ENCODE measurements at regions of chr10 and their contacts with region 1.

Region 1: DNA sequence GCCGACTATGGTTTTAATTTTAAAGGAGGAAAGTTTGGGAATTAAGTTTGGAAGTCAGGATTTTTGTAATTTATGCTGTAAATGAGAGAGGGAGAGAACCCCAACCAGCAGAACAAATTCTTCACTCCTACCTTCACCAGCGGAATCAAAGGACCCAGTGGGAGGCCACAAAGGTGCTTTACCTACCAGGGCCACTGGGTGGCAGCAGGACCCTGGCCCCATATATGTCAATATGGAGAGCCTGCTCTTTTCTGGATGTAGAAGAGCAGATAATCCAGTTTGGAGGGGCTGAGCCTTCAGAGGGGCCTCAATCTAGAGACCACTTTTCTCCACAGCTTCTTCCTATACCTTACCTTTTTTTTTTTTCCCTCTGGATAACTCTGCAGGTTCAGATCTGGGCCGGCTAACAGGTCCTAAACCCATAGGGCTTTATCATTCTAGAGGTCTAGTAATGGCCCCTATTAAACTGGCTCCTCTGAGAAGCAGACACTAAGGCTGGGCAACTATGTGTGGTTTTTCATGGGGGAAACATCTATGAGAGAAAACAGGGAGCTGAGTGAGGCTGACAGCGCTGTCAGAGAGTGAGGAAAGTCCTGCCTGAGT is 8.5 kb upstream of the SCD start:
- DNase-seq: peak; percentile 73
- H3K4me3 ChIP-seq: no peak overlapping the region
- H3K27ac ChIP-seq: no peak overlapping the region
- H3K4me1 ChIP-seq: no peaks in the 10 kb centered on the region
- H3K27me3 ChIP-seq: peaks cover 56% of the 10 kb centered on the region
- CTCF ChIP-seq: peak; percentile 96

Region 2: DNA sequence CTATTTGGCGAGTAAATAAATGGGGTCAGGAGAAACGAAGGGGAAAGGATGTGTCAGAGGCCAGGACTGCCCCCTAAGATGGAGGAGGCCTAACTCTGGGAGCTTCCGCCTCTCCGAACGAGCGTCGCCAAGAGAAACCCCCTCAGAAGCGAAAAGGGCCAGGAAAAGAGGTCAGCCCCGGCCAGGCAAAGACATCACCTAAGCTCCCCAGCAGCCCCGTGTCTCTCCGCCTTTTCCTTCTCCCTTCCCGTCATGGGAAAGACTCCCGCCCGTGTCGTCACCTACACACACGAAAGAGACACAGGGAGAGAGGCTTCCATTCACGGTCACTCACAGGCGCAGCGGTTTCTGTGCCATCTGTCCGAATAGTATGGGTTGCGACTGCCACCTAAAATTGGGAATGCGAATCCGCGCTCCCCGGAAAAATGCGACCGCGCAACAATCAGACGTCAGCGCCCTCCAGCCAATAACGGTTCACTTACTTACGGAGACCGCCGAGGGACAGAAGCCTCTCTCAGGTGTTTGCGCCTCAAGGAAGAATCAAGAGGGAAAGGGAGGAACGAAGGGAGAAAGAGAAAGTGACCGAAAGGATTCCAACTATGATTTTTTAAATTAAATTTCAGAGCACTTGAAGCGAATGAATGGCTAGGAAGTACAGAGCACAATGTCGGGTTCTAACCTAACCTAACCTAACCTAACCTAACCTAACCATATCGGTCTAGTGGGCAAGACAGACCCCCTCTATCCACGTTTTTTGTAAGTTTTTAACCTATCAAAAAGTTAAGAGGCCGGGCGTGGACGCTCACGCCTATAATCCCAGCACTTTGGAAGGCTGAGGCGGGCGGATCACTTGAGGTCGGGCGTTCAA is 71.1 kb before region 1 on chr10 and contains the start of gene CWF19L1:
- intact Hi-C with region 1: no loop called
- DNase-seq: peak; percentile 88
- H3K4me3 ChIP-seq: peak within 1 kb of the TSS; percentile 96
- H3K27ac ChIP-seq: peak within 1 kb of the TSS; percentile 76
- H3K4me1 ChIP-seq: peaks cover 33% of the 10 kb centered on the region
- H3K27me3 ChIP-seq: no peaks in the 10 kb centered on the region
- CTCF ChIP-seq: no peak
- total RNA-seq, gene CWF19L1: 12.6 TPM

Region 3: DNA sequence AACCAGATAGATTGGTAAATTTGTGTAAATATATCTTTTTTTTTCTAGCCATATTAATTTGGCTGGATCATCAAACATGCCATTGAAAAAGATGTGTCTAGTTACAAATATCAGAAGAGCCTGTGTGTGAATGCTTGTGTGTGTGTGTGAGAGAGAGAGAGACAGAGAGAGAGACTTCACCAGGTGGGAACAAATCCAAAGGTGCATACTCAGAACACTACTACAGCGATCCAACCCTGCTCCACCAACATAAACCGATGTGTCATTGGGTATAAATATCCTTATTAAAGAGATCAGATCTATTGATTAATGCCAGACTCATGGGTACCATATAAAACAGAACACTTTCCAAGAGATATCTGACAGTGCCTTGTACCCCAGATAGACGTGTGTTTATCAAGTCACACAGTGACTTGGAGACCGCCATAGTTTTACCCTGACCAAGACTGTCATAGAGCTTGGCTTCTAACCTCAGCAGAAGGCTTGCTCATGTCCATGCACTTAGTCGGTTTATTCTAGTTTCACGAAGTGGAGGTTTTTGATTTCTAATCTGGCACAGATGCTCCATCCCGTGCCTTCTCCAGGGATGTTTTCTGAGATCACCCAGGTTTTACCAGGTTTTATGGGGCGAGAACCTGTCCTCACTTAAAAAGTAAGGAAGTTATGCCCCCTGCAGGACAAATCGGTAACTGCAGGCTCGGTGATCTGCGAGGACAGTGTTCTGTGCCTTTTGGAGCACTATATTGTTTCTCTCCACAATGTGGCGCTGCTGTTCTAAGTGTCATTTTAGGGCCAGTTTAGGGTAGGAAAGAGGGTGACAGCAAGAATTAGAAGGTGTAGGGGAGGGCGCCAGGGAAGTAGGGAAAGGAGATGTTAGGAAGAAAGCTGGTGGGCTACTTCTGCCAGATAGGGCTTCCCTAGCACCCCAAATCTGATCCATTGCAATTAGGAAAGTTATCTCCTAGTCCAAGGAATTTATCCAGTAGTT is 95.0 kb after region 1 on chr10:
- intact Hi-C with region 1: loop called (anchors 2 kb)
- DNase-seq: peak; percentile 86
- H3K4me3 ChIP-seq: no peak overlapping the region
- H3K27ac ChIP-seq: no peak overlapping the region
- H3K4me1 ChIP-seq: no peaks in the 10 kb centered on the region
- H3K27me3 ChIP-seq: peaks cover 27% of the 10 kb centered on the region
- CTCF ChIP-seq: peak; percentile 98